ENCODE measurements at regions of chr4 and their contacts with region 1.

Region 1: GRCh38 chr4:110201502-110201901 is 3.1 kb upstream of the ELOVL6 start:
- DNase-seq: no peak
- H3K4me3 ChIP-seq: no peak overlapping the region
- H3K27ac ChIP-seq: no peak overlapping the region
- H3K4me1 ChIP-seq: no peaks in the 10 kb centered on the region
- H3K27me3 ChIP-seq: no peaks in the 10 kb centered on the region
- CTCF ChIP-seq: no peak
- POLR2A ChIP-seq: no peak

Region 2: DNA sequence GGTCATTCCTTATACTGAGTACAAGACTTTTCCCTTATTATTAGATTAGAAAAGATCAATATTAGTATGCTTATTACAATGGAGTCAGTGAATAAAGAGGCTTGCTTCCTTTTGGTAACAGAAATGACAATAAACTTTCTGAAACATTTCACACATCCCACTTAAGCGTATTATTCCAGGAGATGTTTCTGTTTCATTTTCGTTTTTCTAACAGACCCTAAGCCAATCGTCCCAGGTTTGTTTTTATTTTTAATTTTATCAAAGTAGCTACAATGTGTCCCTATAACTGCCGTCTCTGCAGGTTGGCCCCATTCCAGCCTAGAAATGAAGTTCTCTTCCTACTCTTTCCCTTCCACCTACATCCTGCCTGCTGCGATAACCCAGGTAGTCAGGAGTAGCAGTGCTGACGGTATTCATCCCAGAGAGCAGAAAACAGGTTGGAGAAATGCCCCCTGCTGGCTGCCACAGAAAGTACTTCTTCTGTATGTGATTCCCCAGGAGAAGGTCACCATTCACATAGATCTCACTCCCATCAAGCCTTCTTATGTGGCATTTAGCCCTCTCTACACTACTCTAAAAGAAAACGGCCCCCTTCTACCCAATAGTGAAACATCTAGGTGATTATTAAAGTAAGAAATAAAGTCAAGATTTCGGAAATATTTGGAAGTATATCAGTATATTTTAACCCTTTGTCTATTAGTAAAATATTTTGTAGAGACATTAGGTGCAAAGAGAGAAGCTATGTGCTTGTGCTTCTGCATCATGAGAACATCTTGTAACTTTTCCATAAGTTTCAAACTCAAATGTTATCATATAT is 314.8 kb after region 1 on chr4:
- intact Hi-C with region 1: loop called (anchors 10 kb)
- DNase-seq: peak; percentile 73 to 79
- H3K4me3 ChIP-seq: peak overlapping the region; percentile 36 to 69 (median 59)
- H3K27ac ChIP-seq: peak overlapping the region; percentile 60 to 75
- H3K4me1 ChIP-seq: no peaks in the 10 kb centered on the region
- H3K27me3 ChIP-seq: no peaks in the 10 kb centered on the region
- CTCF ChIP-seq: peak; percentile 69 to 82 (median 76)
- POLR2A ChIP-seq: no peak

Region 3: DNA sequence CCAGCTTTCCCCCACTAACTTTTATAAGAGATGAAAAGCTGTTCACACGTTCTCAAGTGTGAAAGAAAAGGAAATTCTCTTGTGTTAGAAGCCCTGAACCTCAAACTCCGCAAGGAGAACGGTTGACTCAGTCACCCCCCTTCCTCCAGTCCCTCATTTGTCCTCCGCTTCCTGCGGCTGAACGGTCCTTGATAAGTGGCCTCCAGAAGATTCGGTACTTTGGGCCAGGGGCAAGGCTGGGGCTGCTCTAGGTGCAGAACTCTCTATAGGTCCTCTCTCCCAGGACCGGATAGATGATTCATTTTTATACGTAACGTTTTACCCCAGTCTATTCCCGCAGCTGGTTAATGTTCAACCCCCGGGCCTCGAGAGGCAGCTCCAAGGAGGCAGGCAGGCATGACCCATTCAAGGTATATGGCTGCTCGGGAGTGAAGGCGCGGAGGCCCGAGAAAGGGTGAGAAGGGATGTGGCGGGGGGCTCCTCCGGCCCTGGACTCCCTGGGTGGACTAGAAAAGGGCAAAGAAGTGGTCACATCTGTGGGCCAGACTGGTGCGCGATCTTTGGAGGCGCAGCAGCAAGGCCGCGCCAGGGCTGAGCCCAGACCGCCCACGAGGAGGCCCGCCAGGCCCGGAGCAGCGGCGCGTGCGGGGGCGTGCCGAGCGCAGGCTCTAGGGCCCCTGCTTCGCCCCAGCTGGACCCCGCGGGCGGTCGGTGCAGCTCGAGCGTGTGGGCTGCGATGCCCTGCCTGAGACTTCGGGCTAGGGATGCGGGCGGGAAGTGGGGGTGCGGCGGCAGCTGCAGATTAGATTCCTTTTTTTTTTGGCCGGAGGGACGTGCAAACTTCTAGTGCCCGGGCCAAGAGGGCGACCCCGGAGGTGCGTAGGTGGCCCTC is 409.7 kb after region 1 on chr4:
- intact Hi-C with region 1: no loop called
- DNase-seq: no peak
- H3K4me3 ChIP-seq: peak overlapping the region in 2 of 3 donors; percentile 21 to 56
- H3K27ac ChIP-seq: no peak overlapping the region
- H3K4me1 ChIP-seq: no peaks in the 10 kb centered on the region
- H3K27me3 ChIP-seq: peaks cover 8 to 77% of the 10 kb centered on the region in 2 donors
- CTCF ChIP-seq: no peak
- POLR2A ChIP-seq: no peak